CD4-positive, alpha-beta T cell (primary cell): ENCODE measurements at regions of chr20 and their contacts with region 1.

Region 1: GRCh38 chr20:35454881-35455609 is at the start of gene CEP250:
- DNase-seq: peak; percentile 87 to 97 (median 94)
- ATAC-seq: peak; percentile 96
- H3K4me3 ChIP-seq: peak within 1 kb of the TSS; percentile 91
- H3K4me3 Mint-ChIP-seq: peak within 1 kb of the TSS; percentile 97
- H3K27ac ChIP-seq: peak within 1 kb of the TSS; percentile 83 to 94
- H3K27ac Mint-ChIP-seq: peak within 1 kb of the TSS; percentile 87
- H3K4me1 ChIP-seq: peaks cover 19% of the 10 kb centered on the region
- H3K4me1 Mint-ChIP-seq: peaks cover 29% of the 10 kb centered on the region
- H3K27me3 ChIP-seq: no peaks in the 10 kb centered on the region
- H3K27me3 Mint-ChIP-seq: no peaks in the 10 kb centered on the region
- CTCF ChIP-seq: no peak
- total RNA-seq, gene CEP250: 27.6 to 33.1 TPM

Region 2: DNA sequence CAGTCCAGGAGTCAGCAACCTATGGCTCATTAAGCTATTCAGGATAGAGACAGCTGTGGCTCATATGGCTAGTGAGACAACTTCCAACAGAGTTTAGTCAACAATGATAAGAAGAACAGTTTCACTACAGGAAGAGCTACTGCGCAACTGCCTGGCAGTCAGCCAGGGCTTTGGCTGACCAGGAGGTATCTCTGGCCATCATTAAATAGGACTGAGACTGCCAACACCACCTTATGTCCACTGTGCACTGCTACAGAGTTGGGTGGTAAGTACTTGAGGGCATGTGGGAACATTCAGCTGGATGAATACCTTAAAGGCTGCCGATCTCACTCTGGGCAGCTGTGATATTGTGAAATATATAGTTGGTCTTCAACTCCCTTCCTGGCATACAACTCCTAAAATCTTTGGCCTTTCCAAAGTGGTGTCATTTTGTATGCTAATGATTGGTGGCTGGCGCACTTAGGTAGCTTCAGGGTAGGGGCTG is 110.6 kb before region 1 on chr20:
- CTCF ChIA-PET with region 1: no interaction called
- POLR2A ChIA-PET with region 1: no interaction called
- intact Hi-C with region 1: no loop called
- DNase-seq: no peak
- ATAC-seq: no peak
- H3K4me3 ChIP-seq: no peak overlapping the region
- H3K4me3 Mint-ChIP-seq: no peak overlapping the region
- H3K27ac ChIP-seq: no peak overlapping the region
- H3K27ac Mint-ChIP-seq: no peak overlapping the region
- H3K4me1 ChIP-seq: no peaks in the 10 kb centered on the region
- H3K4me1 Mint-ChIP-seq: no peaks in the 10 kb centered on the region
- H3K27me3 ChIP-seq: no peaks in the 10 kb centered on the region
- H3K27me3 Mint-ChIP-seq: no peaks in the 10 kb centered on the region
- CTCF ChIP-seq: no peak

Region 3: DNA sequence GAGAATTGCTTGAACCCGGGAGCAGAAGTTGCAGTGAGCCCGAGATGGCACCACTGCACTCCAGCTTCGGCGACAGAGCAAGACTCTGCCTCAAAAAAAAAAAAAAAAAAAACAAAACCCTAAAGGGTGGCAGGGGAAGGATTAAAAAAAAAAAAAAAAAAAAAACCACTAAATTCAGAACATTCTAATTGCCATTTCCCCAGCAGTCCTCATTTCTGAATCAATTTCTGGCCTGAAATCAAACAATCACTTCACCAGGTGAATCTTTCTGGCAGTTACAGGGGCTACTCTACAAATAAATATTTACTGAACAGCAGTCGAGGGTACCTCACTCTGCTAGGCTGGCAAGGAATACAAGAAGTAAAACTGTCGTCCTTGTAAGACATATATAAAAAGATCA is 44.4 kb before region 1 on chr20:
- CTCF ChIA-PET with region 1: interaction called, 3 read pairs
- POLR2A ChIA-PET with region 1: interaction called, 20 read pairs
- intact Hi-C with region 1: loop called in 1 of 2 experiments (anchors 2 kb)
- DNase-seq: no peak
- ATAC-seq: no peak
- H3K4me3 ChIP-seq: no peak overlapping the region
- H3K4me3 Mint-ChIP-seq: peak overlapping the region; percentile 96
- H3K27ac ChIP-seq: no peak overlapping the region
- H3K27ac Mint-ChIP-seq: peak overlapping the region; percentile 90
- H3K4me1 ChIP-seq: peaks cover 17% of the 10 kb centered on the region
- H3K4me1 Mint-ChIP-seq: peaks cover 23% of the 10 kb centered on the region
- H3K27me3 ChIP-seq: no peaks in the 10 kb centered on the region
- H3K27me3 Mint-ChIP-seq: no peaks in the 10 kb centered on the region
- CTCF ChIP-seq: no peak

Region 4: GRCh38 chr20:35490736-35491181 is 35.7 kb after region 1 on chr20:
- CTCF ChIA-PET with region 1: interaction called, 3 read pairs
- POLR2A ChIA-PET with region 1: interaction called, 31 read pairs
- intact Hi-C with region 1: loop called in 1 of 2 experiments (anchors 5 kb)
- DNase-seq: peak; percentile 41 to 89 (median 59)
- ATAC-seq: peak; percentile 99
- H3K4me3 ChIP-seq: peak overlapping the region; percentile 94
- H3K4me3 Mint-ChIP-seq: peak overlapping the region; percentile 100
- H3K27ac ChIP-seq: peak overlapping the region; percentile 63 to 87
- H3K27ac Mint-ChIP-seq: peak overlapping the region; percentile 98
- H3K4me1 ChIP-seq: peaks cover 59% of the 10 kb centered on the region
- H3K4me1 Mint-ChIP-seq: peaks cover 72% of the 10 kb centered on the region
- H3K27me3 ChIP-seq: no peaks in the 10 kb centered on the region
- H3K27me3 Mint-ChIP-seq: no peaks in the 10 kb centered on the region
- CTCF ChIP-seq: no peak

Region 5: DNA sequence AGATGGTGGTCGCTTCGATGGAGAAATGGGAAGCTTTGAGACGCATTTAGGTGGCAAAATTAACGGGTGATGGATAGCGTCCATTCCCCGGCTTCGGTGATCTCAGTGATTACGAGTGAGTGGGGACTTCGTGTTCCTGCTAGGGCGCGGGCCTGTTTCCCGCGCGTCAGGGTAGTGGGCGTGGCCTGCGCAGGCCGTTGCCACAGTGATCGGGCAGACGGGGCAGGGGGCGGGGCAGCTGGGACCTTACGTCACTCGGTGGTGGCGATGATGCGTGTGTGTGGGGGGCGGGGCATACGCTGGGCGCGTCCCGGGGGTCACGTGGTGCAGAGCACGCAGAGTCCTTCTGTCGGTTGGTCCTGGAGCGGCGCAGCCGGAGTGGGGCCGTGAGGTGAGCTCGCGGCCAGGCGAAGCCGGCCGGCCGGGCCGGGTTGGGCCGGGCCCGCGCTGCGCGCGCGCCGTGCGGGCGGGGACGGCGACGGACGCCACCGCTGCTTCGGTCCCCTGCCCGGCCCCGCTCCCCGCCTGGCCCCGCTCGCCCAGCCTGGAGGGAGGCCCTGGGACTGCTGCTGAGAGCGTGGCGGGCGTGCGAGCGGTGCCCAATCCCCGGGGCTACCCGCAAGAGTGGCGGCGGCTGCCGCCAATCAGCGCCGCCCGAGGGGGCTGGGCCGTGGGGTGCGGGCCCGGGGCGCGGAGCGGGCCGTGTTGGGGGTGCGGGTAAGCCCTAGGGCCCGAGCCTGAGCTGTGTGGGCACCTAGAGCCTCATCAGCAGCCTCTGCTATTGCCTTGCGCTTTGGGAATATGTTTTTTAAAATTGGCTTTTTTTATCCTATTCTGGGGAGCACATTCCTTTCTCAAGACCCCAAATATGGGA is 316.9 kb after region 1 on chr20 and contains the start of gene PHF20:
- CTCF ChIA-PET with region 1: no interaction called
- POLR2A ChIA-PET with region 1: interaction called, 8 read pairs
- intact Hi-C with region 1: loop called in 1 of 2 experiments (anchors 10 kb)
- DNase-seq: peak; percentile 100
- ATAC-seq: peak; percentile 84
- H3K4me3 ChIP-seq: peak within 1 kb of the TSS; percentile 79
- H3K4me3 Mint-ChIP-seq: peak within 1 kb of the TSS; percentile 97
- H3K27ac ChIP-seq: peak within 1 kb of the TSS; percentile 86 to 96
- H3K27ac Mint-ChIP-seq: peak within 1 kb of the TSS; percentile 96
- H3K4me1 ChIP-seq: peaks cover 84% of the 10 kb centered on the region
- H3K4me1 Mint-ChIP-seq: peaks cover 75% of the 10 kb centered on the region
- H3K27me3 ChIP-seq: no peaks in the 10 kb centered on the region
- H3K27me3 Mint-ChIP-seq: no peaks in the 10 kb centered on the region
- CTCF ChIP-seq: no peak
- total RNA-seq, gene PHF20: 119 to 126 TPM